Astrocyte of the cerebellum (primary cell): ENCODE measurements at regions of chr3 and their contacts with region 1.

Region 1: GRCh38 chr3:28348629-28349483 is at the starts of genes AZI2 and ZCWPW2:
- DNase-seq: peak; percentile 92
- H3K4me3 ChIP-seq: peak within 1 kb of the TSS; percentile 69
- CTCF ChIP-seq: peak; percentile 32

Region 2: GRCh38 chr3:27721717-27722542 is 626.9 kb before region 1 on chr3 and contains the start of gene EOMES:
- in situ Hi-C with region 1: loop called (anchors 10 kb)
- DNase-seq: no peak
- H3K4me3 ChIP-seq: peak within 1 kb of the TSS; percentile 29
- CTCF ChIP-seq: peak; percentile 35

Region 3: GRCh38 chr3:28022916-28023315 is 325.9 kb before region 1 on chr3:
- in situ Hi-C with region 1: no loop called
- DNase-seq: no peak
- H3K4me3 ChIP-seq: no peak overlapping the region
- CTCF ChIP-seq: no peak

Region 4: DNA sequence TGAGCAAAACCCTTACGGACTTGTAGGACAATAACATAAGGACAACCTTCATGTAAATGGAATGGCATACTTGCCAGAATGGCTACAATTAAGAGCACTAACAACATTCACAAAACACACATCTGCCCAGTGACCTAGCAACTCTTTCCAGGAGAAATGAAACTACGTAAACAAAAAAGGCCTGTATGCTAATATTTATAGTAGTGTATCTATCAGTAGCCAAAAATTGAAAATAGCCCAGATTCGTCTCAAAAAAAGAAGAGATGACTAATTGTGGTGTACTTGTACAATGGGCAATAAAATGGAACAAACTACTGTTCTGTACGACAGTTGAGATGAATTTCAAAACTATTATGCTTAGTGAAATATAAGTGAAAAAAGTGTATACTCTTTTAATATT is 69.1 kb before region 1 on chr3:
- in situ Hi-C with region 1: no loop called
- DNase-seq: peak; percentile 9
- H3K4me3 ChIP-seq: no peak overlapping the region
- CTCF ChIP-seq: no peak